Tibial artery (tissue), 4 donors: ENCODE measurements at regions of chr1 and their contacts with region 1.

Region 1: DNA sequence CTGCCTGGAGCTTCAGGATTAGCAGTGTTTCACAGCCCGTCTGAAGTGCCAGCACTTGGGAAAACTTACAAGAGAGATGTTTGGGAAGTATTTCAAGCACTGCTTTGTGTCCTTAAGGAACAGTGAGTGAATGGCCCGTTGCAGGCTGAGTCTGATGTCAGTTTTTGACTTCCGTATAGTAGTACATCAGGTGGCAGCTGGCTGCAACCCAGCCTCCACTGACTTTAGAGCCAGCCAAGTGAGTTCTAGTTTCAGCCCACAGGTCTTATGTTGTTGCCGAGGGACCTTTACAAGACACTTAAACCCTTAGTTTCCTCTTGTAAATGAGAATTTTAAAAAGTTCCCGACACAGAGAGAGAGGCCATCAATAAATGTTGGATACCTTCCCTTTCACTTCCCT is 35.0 kb downstream of the UCK2 start:
- DNase-seq: no peak
- H3K4me3 ChIP-seq: no peak overlapping the region
- H3K27ac ChIP-seq: no peak overlapping the region
- H3K4me1 ChIP-seq: peaks cover 0 to 27% (median 6%) of the 10 kb centered on the region in 4 donors
- H3K27me3 ChIP-seq: no peaks in the 10 kb centered on the region
- CTCF ChIP-seq: no peak

Region 2: GRCh38 chr1:165842671-165843129 is 19.7 kb before region 1 on chr1:
- intact Hi-C with region 1: no loop called
- DNase-seq: no peak
- H3K4me3 ChIP-seq: no peak overlapping the region
- H3K27ac ChIP-seq: no peak overlapping the region
- H3K4me1 ChIP-seq: peaks cover 0 to 17% (median 5%) of the 10 kb centered on the region in 4 donors
- H3K27me3 ChIP-seq: no peaks in the 10 kb centered on the region
- CTCF ChIP-seq: no peak

Region 3: GRCh38 chr1:166032572-166033371 is 170.3 kb after region 1 on chr1:
- intact Hi-C with region 1: no loop called
- DNase-seq: no peak
- H3K4me3 ChIP-seq: no peak overlapping the region
- H3K27ac ChIP-seq: no peak overlapping the region
- H3K4me1 ChIP-seq: peaks cover 0 to 4% (median 0%) of the 10 kb centered on the region in 4 donors
- H3K27me3 ChIP-seq: no peaks in the 10 kb centered on the region
- CTCF ChIP-seq: no peak

Region 4: DNA sequence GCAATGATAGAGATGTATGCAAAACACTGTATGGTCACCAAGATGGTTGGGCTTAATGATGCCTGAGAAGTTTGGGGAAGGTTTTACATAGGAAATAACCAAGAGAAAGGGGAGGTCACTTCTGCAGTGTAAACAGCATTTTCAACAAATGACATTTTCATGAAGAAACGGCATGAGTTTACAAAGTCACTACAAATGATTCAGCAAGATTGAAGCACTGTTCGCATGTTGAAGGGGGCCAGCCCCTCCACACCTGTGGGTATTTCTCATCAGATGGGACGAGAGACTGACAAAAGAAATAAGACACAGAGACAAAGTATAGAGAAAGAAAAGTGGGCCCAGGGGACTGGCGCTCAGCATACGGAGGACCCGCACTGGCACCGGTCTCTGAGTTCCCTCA is 742.7 kb after region 1 on chr1:
- intact Hi-C with region 1: loop called (anchors 5 kb)
- DNase-seq: no peak
- H3K4me3 ChIP-seq: no peak overlapping the region
- H3K27ac ChIP-seq: no peak overlapping the region
- H3K4me1 ChIP-seq: no peaks in the 10 kb centered on the region
- H3K27me3 ChIP-seq: no peaks in the 10 kb centered on the region
- CTCF ChIP-seq: no peak